Activated naive CD4-positive, alpha-beta T cell treated with anti-CD3 and anti-CD28 coated beads for 36 hours (primary cell): ENCODE measurements at regions of chr4 and their contacts with region 1.

Region 1: GRCh38 chr4:48127682-48128394 is 6.2 kb downstream of the TXK start:
- DNase-seq: peak; percentile 95
- H3K4me3 Mint-ChIP-seq: peak overlapping the region; percentile 51
- H3K27ac Mint-ChIP-seq: peak overlapping the region; percentile 99
- H3K4me1 Mint-ChIP-seq: peaks cover 80% of the 10 kb centered on the region
- H3K27me3 Mint-ChIP-seq: no peaks in the 10 kb centered on the region

Region 2: DNA sequence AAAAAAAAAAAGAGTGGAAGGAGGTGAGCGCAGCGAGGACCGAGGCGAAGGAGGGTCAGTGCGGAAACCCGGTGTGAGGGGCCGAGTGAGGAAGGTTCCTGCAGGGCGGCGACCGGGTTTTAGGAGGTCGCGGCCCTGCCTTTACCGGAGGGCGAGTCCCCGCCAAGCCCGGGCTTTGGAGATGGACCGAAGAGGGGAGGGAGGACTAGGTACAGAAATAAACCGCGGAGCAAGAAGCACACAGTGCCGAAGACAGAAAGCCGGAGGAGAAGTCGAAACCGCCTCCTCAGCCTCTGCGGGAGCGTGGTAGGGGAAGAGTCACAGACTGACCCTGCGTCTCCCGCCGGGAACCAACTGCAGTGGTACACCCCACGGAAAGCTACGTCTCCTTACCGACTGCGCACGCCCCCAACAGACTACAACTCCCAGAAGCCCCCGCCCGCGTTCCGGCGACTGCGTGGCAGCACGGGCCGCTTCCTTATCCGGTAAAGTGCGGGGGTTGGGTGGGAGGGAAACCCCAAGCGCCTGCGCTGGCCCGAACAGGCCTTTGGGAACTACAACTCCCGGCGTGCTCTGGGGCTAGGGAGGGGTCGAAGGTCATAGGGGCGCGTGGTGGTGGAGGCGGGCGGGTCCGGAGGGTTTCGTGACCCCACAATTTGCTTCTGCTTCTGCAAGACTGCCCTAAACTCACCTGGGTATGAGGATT is 213.5 kb before region 1 on chr4 and contains the start of gene NFXL1:
- CTCF ChIA-PET with region 1: no interaction called
- intact Hi-C with region 1: loop called (anchors 1 kb)
- DNase-seq: peak; percentile 97
- H3K4me3 Mint-ChIP-seq: peak within 1 kb of the TSS; percentile 90
- H3K27ac Mint-ChIP-seq: peak within 1 kb of the TSS; percentile 91
- H3K4me1 Mint-ChIP-seq: peaks cover 29% of the 10 kb centered on the region
- H3K27me3 Mint-ChIP-seq: no peaks in the 10 kb centered on the region
- total RNA-seq, gene NFXL1: 10.4 to 11.4 TPM

Region 3: DNA sequence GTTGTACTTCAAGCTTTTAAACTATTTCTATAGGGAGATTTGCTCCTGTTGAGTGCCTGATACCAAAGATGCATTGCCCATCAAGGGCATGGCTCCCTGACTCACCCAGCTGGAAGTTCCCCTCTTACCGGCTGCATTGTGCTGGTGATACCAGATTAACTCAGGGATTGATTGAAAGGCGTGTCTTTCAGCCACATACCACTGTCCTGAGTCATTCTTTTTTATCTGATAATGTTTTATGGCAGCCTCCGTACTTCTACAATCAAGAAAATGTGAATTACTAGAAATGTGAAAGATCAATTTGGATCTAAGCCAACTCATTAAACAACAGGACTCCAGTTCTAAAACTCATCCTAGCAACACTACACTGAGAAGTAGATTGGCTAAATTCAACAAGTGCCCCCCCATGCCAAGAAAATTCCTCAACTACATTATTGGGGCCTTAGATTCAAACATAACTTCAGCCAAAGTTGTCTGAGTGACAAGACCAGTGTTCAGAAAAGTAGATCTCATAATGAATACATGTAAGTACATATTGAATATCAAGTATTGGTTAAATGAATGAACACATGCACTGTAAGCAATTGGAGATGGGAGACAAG is 33.8 kb before region 1 on chr4:
- CTCF ChIA-PET with region 1: interaction called, 6 read pairs
- intact Hi-C with region 1: loop called (anchors 1 kb)
- DNase-seq: peak; percentile 78
- H3K4me3 Mint-ChIP-seq: no peak overlapping the region
- H3K27ac Mint-ChIP-seq: peak overlapping the region; percentile 61
- H3K4me1 Mint-ChIP-seq: peaks cover 21% of the 10 kb centered on the region
- H3K27me3 Mint-ChIP-seq: no peaks in the 10 kb centered on the region

Region 4: GRCh38 chr4:48141048-48141447 is 13.2 kb after region 1 on chr4:
- CTCF ChIA-PET with region 1: interaction called, 162 read pairs
- intact Hi-C with region 1: loop called (anchors 1 kb)
- DNase-seq: no peak
- H3K4me3 Mint-ChIP-seq: no peak overlapping the region
- H3K27ac Mint-ChIP-seq: no peak overlapping the region
- H3K4me1 Mint-ChIP-seq: peaks cover 46% of the 10 kb centered on the region
- H3K27me3 Mint-ChIP-seq: no peaks in the 10 kb centered on the region

Region 5: GRCh38 chr4:48429709-48430474 is 302.1 kb after region 1 on chr4:
- CTCF ChIA-PET with region 1: interaction called, 3 read pairs
- intact Hi-C with region 1: loop called (anchors 1 kb)
- DNase-seq: peak; percentile 16
- H3K4me3 Mint-ChIP-seq: no peak overlapping the region
- H3K27ac Mint-ChIP-seq: no peak overlapping the region
- H3K4me1 Mint-ChIP-seq: peaks cover 49% of the 10 kb centered on the region
- H3K27me3 Mint-ChIP-seq: no peaks in the 10 kb centered on the region

Region 6: DNA sequence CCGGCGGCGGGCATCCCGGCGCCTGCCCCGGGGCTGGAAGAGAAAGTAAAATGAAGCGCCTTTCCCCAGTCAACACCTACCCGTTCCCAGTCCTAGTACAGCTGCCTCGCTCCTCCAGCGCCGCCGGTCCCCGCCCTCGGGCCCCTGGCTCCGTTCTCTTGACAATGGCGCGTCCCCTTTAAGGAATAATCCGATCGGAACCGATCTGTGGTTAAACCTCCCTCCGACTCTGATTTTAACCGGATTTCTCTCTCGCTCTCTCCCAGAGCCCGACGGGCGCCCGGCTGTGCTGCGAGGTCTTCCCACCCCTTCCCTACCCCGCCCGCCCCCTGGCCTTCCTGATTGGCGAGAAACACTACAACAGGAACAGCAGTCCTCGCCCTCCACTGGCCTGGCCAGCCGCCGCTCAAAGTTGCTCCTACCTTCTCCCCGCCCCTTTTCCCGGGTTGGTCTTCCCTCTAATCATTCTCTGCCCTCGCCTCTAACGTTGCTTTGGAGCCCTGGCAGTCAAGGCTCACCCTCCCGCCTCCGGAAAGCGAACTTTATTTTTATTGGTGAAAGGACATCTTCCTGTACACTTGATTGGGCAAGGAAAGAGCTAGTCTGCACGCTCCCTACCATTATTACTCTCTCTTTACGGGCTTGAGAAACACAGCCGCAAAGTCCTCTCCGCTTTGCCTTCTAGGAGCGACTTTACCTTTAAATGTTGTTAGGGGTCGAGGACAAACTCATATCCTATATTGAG is 652.3 kb after region 1 on chr4 and contains the start of gene FRYL:
- CTCF ChIA-PET with region 1: no interaction called
- intact Hi-C with region 1: loop called (anchors 2 kb)
- DNase-seq: peak; percentile 100
- H3K4me3 Mint-ChIP-seq: peak within 1 kb of the TSS; percentile 92
- H3K27ac Mint-ChIP-seq: peak within 1 kb of the TSS; percentile 98
- H3K4me1 Mint-ChIP-seq: peaks cover 41% of the 10 kb centered on the region
- H3K27me3 Mint-ChIP-seq: no peaks in the 10 kb centered on the region
- total RNA-seq, gene FRYL: 44.8 to 54.2 TPM